ENCODE measurements at regions of chr10 and their contacts with region 1.

Region 1: DNA sequence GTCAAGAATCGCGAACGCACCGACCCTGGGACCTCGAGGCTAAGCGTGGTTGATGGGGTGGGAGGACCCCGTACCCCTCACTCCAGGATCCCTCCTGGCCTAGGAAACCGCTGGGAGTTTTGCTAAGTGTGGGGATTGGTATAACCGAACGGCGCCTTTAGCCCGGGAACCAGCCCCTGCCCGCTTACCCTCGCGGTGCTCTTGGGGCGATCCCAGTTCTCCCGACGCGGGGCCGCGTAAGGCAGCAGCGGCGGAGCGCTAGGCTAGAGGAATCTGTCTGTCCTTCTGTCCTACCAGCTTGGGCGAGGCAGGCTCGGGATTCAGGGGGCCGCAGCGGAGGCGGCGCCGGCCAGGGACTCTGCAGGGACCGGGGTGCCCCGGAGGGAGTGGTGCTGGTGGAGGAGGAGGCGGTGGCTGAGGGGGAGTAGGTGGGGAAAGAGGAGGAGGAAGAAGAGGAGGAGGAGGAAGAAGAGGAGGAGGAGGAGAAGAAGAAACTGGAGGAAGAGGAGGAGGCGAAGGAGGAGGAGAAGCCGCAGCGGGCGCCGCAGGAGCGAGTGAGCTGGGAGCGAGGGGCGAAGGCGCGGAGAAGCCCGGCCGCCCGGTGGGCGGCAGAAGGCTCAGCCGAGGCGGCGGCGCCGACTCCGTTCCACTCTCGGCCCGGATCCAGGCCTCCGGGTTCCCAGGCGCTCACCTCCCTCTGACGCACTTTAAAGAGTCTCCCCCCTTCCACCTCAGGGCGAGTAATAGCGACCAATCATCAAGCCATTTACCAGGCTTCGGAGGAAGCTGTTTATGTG is 439 bp upstream of the EMX2 start:
- DNase-seq: peak; percentile 60 to 81 (median 81)
- ATAC-seq: peak; percentile 16 to 40
- H3K4me3 ChIP-seq: peak overlapping the region; percentile 39
- H3K27ac ChIP-seq: no peak overlapping the region
- H3K4me1 ChIP-seq: no peaks in the 10 kb centered on the region
- H3K27me3 ChIP-seq: no peaks in the 10 kb centered on the region

Region 2: GRCh38 chr10:117126034-117126433 is 416.1 kb before region 1 on chr10:
- intact Hi-C with region 1: no loop called
- DNase-seq: no peak
- ATAC-seq: no peak
- H3K4me3 ChIP-seq: no peak overlapping the region
- H3K27ac ChIP-seq: no peak overlapping the region
- H3K4me1 ChIP-seq: no peaks in the 10 kb centered on the region
- H3K27me3 ChIP-seq: peaks cover 4% of the 10 kb centered on the region

Region 3: DNA sequence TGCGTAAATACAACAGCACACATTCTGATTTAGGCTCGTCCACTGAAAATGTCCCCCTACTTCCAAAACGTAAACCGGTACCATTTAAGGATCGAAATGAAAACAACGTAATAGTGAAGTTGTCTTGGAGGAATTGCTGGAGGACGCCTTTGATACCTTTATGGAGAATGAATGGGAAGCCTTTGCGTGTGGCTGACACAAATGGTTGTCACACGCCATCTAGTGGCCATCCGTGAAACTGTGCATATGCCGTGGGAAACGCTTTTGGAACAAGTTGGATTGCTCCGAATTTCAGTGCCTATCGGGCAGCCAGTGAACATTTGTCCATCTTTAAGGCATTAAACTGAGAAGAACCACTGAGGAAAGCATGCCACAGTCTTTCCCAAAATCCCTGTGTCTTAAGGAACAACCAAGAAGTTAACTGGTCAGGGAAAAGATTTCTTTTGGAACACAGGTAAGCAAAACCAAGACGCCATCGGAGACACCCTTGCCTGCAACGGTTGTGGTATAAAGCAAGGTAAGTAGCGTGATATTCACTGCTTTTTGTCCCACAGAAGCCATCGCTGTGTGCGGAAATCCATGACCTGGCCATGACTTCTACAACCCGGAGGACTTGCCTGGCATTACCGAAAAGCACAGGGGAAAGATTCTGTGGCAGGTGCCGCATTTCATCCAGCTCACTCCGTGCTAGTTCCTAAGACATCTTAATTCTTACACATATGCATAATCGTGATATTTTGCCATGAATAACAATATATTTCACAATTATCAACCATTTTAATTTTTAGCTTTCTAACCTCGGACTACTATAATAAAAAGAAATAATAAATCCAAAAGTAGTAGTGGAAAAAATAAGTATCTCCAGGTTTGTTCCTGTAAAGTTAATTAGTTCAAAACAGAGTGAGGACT is 699.4 kb after region 1 on chr10:
- intact Hi-C with region 1: loop called in 1 of 4 experiments (anchors 5 kb)
- DNase-seq: peak; percentile 76 to 92 (median 84)
- ATAC-seq: peak; percentile 64 to 70
- H3K4me3 ChIP-seq: no peak overlapping the region
- H3K27ac ChIP-seq: no peak overlapping the region
- H3K4me1 ChIP-seq: no peaks in the 10 kb centered on the region
- H3K27me3 ChIP-seq: no peaks in the 10 kb centered on the region